MCF 10A (cell line): ENCODE measurements at regions of chr12 and their contacts with region 1.

Region 1: DNA sequence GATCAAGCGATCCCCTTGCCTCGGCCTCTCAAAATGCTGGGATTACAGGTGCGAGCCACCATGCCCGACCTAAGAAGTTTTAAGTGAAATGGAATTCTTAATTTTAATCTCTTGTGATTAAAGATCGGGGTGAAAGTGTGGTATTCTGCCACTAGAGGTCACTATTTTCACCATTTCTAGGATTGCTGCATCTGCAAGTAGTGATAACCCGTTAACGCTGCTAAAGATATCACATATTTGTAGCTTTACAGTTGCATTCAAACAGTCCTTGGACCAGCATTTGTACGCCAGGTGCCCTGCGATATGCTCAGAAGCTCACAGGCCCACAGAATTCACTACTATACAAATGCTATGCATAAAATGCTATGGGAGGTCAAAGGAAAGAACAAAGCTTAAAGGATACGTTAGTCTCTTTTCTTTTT is 19.3 kb downstream of the CCDC62 start:
- DNase-seq: peak; percentile 64
- H3K4me3 Mint-ChIP-seq: no peak overlapping the region
- H3K27ac Mint-ChIP-seq: no peak overlapping the region
- H3K4me1 Mint-ChIP-seq: peaks cover 8% of the 10 kb centered on the region
- H3K27me3 Mint-ChIP-seq: no peaks in the 10 kb centered on the region
- CTCF ChIP-seq: peak; percentile 46

Region 2: GRCh38 chr12:122813310-122813713 is 19.6 kb after region 1 on chr12:
- CTCF ChIA-PET with region 1: interaction called, 10 read pairs
- POLR2A ChIA-PET with region 1: interaction called, 8 read pairs
- intact Hi-C with region 1: no loop called
- DNase-seq: no peak
- H3K4me3 Mint-ChIP-seq: no peak overlapping the region
- H3K27ac Mint-ChIP-seq: no peak overlapping the region
- H3K4me1 Mint-ChIP-seq: no peaks in the 10 kb centered on the region
- H3K27me3 Mint-ChIP-seq: no peaks in the 10 kb centered on the region
- CTCF ChIP-seq: no peak

Region 3: GRCh38 chr12:122825773-122826724 is 32.4 kb after region 1 on chr12:
- CTCF ChIA-PET with region 1: interaction called, 21 read pairs
- POLR2A ChIA-PET with region 1: interaction called, 4 read pairs
- intact Hi-C with region 1: loop called (anchors 1 kb)
- DNase-seq: no peak
- H3K4me3 Mint-ChIP-seq: peak overlapping the region; percentile 67
- H3K27ac Mint-ChIP-seq: no peak overlapping the region
- H3K4me1 Mint-ChIP-seq: peaks cover 12% of the 10 kb centered on the region
- H3K27me3 Mint-ChIP-seq: no peaks in the 10 kb centered on the region
- CTCF ChIP-seq: no peak

Region 4: GRCh38 chr12:122860346-122861090 is 66.8 kb after region 1 on chr12:
- CTCF ChIA-PET with region 1: interaction called, 31 read pairs
- POLR2A ChIA-PET with region 1: interaction called, 3 read pairs
- intact Hi-C with region 1: loop called (anchors 5 kb)
- DNase-seq: peak; percentile 79
- H3K4me3 Mint-ChIP-seq: no peak overlapping the region
- H3K27ac Mint-ChIP-seq: no peak overlapping the region
- H3K4me1 Mint-ChIP-seq: peaks cover 6% of the 10 kb centered on the region
- H3K27me3 Mint-ChIP-seq: no peaks in the 10 kb centered on the region
- CTCF ChIP-seq: peak; percentile 85

Region 5: GRCh38 chr12:122965851-122966722 is 172.4 kb after region 1 on chr12 and contains the start of gene ABCB9:
- CTCF ChIA-PET with region 1: interaction called, 10 read pairs
- POLR2A ChIA-PET with region 1: interaction called, 4 read pairs
- intact Hi-C with region 1: no loop called
- DNase-seq: peak; percentile 92
- H3K4me3 Mint-ChIP-seq: peak within 1 kb of the TSS; percentile 72
- H3K27ac Mint-ChIP-seq: no peak within 1 kb of the TSS
- H3K4me1 Mint-ChIP-seq: no peaks in the 10 kb centered on the region
- H3K27me3 Mint-ChIP-seq: no peaks in the 10 kb centered on the region
- CTCF ChIP-seq: no peak
- total RNA-seq, gene ABCB9: 1.6 and 3.2 TPM in 2 replicates